ENCODE measurements at regions of chr12 and their contacts with region 1.

Region 1: GRCh38 chr12:98227162-98227561 is 288.2 kb upstream of the TMPO start:
- DNase-seq: peak; percentile 20
- H3K4me3 ChIP-seq: no peak overlapping the region
- H3K27ac ChIP-seq: no peak overlapping the region
- H3K4me1 ChIP-seq: peaks cover 52% of the 10 kb centered on the region
- CTCF ChIP-seq: peak; percentile 71

Region 2: GRCh38 chr12:98238515-98239130 is 11.5 kb after region 1 on chr12:
- CTCF ChIA-PET with region 1: interaction called, 3 read pairs
- POLR2A ChIA-PET with region 1: interaction called, 10 read pairs
- intact Hi-C with region 1: no loop called
- DNase-seq: no peak
- H3K4me3 ChIP-seq: no peak overlapping the region
- H3K27ac ChIP-seq: no peak overlapping the region
- H3K4me1 ChIP-seq: peaks cover 17% of the 10 kb centered on the region
- CTCF ChIP-seq: no peak

Region 3: GRCh38 chr12:98244136-98244535 is 17.0 kb after region 1 on chr12:
- CTCF ChIA-PET with region 1: interaction called, 3 read pairs
- POLR2A ChIA-PET with region 1: interaction called, 10 read pairs
- intact Hi-C with region 1: no loop called
- DNase-seq: no peak
- H3K4me3 ChIP-seq: no peak overlapping the region
- H3K27ac ChIP-seq: no peak overlapping the region
- H3K4me1 ChIP-seq: peaks cover 13% of the 10 kb centered on the region
- CTCF ChIP-seq: no peak

Region 4: DNA sequence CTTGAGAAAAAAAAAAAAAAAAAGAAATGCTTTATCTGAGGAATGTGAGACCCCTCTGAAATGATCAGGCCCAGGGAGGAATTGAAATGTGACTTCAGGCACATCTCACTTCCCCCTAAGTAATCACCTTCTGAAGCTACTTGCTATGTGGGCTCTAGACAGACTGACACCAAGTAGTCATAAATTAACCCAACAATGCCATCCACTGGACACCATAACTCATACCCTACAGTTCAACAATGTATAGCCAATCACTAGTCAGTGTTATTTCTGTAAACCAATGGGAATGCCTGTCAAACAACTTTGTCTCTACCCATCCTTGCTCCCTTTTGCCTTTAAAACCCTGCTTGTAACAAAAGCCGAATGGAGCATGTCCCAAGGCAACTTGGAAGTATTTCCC is 105.5 kb after region 1 on chr12:
- CTCF ChIA-PET with region 1: no interaction called
- POLR2A ChIA-PET with region 1: interaction called, 3 read pairs
- intact Hi-C with region 1: loop called (anchors 5 kb)
- DNase-seq: peak; percentile 80
- H3K4me3 ChIP-seq: no peak overlapping the region
- H3K27ac ChIP-seq: no peak overlapping the region
- H3K4me1 ChIP-seq: peaks cover 35% of the 10 kb centered on the region
- CTCF ChIP-seq: peak; percentile 71

Region 5: GRCh38 chr12:98544751-98545150 is 317.6 kb after region 1 on chr12:
- CTCF ChIA-PET with region 1: no interaction called
- POLR2A ChIA-PET with region 1: no interaction called
- intact Hi-C with region 1: no loop called
- DNase-seq: no peak
- H3K4me3 ChIP-seq: no peak overlapping the region
- H3K27ac ChIP-seq: no peak overlapping the region
- H3K4me1 ChIP-seq: no peaks in the 10 kb centered on the region
- CTCF ChIP-seq: no peak

Measured in OCI-LY7 (cell line).